ENCODE measurements at regions of chr9 and their contacts with region 1.

Region 1: GRCh38 chr9:102631559-102631958 is 363.6 kb upstream of the CYLC2 start:
- DNase-seq: no peak
- H3K4me3 ChIP-seq: no peak overlapping the region
- H3K27ac ChIP-seq: no peak overlapping the region
- H3K27me3 ChIP-seq: no peaks in the 10 kb centered on the region
- CTCF ChIP-seq: no peak

Region 2: DNA sequence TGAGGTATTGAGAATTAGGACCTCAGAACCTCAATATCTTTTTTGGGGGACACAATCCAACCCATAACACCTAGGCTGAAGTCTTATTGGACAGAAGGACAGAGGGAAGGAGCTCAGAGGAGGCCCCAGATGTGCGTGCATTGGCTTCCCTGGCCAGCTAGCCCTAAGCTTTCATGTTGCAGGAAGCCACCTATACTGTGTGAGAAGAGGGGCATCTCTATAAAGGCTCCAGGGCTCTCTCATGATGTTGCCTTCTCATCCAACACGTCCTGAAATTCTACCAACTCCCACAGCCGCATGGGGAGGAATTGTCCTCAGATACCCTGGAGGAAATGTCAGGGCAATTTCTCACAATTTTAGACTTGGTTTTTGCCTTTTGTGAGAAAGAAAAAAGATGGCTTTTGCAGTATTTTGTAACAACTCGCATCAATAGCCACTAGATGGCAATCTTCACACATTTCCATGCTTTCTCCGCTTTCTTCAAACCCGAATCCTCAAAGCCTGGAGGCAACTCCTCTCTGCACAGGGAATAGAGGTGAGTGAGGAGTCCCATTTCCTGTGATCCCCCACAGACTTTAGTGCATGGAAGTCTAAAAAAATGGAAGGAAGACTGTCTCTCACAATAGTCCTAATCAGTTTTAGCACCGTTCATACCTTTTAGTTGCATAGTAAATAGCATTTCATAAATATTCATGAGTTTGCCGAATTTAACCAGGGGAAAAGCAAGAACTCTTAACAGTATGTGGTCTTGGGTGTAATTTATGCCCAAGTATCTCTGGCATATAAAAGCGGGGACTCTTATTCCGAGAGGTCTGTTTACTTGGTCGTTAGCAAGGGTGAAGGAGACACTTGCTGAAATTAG is 1029.4 kb before region 1 on chr9:
- CTCF ChIA-PET with region 1: interaction called, 11 read pairs
- POLR2A ChIA-PET with region 1: no interaction called
- DNase-seq: peak; percentile 16
- H3K4me3 ChIP-seq: no peak overlapping the region
- H3K27ac ChIP-seq: no peak overlapping the region
- H3K27me3 ChIP-seq: peaks cover 2% of the 10 kb centered on the region
- CTCF ChIP-seq: peak; percentile 76

Measured in AG04450 (cell line).